Activated CD4-positive, alpha-beta T cell treated with anti-CD3 and anti-CD28 coated beads for 36 hours (primary cell): ENCODE measurements at regions of chr1 and their contacts with region 1.

Region 1: GRCh38 chr1:161389691-161390558 is 22.2 kb upstream of the CFAP126 start:
- DNase-seq: peak; percentile 97
- ATAC-seq: peak; percentile 83
- H3K4me3 Mint-ChIP-seq: peak overlapping the region; percentile 87
- H3K27ac Mint-ChIP-seq: peak overlapping the region; percentile 96
- H3K4me1 Mint-ChIP-seq: peaks cover 43% of the 10 kb centered on the region
- H3K27me3 Mint-ChIP-seq: no peaks in the 10 kb centered on the region

Region 2: DNA sequence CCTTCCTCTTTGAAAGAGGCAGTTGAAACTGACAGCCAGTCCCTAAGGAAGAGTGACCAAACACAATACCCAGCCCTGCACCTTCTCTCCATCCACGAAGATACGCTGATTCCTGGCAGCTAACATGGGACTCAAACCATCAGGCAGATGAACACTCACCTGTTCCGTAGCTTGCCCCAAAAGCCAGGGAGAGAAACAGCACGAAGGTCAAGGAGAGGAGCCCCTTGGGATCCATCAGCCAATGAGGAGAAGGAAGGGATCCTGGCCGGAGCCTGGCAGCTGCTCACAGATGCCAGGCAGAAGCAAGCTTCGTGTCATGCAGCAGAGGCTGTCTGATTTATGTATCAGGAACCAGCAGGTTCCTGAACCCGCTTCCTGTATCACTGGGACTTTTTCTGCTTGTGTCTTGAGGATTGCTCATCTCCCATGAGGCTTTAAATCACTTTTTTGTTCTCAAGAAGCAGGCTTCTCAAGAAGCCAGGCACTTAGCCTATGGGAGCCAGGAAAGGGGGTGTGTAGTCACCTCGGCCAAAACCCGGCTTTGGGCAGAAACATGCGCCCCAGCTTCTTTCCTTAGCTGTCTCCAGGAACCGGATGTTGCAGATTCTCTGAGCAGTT is 743.1 kb before region 1 on chr1 and contains the start of gene SLAMF1:
- CTCF ChIA-PET with region 1: no interaction called
- POLR2A ChIA-PET with region 1: interaction called, 12 read pairs
- intact Hi-C with region 1: no loop called
- DNase-seq: peak; percentile 81
- ATAC-seq: peak; percentile 81
- H3K4me3 Mint-ChIP-seq: peak within 1 kb of the TSS; percentile 93
- H3K27ac Mint-ChIP-seq: peak within 1 kb of the TSS; percentile 92
- H3K4me1 Mint-ChIP-seq: peaks cover 56% of the 10 kb centered on the region
- H3K27me3 Mint-ChIP-seq: no peaks in the 10 kb centered on the region
- total RNA-seq, gene SLAMF1: 103 to 108 TPM

Region 3: DNA sequence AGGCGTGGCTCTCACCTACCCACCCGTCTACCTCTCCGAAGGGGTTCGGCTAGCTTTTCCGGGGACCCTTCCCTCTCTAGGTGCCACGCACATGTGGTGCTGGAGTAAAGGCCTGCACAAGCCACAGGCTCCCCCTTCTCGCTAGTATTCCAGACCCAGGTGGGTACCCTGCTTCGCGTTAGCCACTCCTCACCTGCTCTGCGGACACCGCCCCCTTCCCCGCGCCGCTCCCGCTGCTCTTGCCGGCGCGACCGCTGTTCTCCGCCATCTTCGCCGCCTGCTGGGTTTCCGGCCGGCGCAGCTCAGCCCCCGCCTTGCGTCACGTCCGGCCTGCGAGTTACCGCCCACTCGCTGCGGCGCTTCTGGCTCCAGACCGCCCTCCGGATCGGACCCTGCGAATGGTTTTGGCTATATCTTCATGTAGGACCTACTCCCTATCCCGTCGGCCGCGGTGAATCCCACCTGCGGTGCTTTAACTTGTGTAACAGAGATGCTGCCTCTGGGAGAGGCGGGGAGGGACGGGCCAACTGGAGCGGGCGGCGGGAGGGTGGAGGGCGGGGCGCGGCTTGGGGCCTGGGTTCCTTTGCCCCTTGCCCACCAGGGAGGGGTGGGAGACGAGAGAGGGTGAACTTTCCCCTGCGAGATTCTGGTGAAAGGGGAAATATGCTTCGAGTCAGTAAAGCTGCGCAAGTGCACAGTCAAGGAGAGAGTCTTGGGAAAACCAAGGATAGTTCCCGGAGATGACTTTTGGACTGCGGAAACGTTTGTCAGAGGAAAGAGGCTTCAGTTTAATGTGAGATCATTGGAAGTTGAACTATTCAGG is 272.0 kb before region 1 on chr1 and contains the starts of genes NIT1 and PFDN2:
- CTCF ChIA-PET with region 1: no interaction called
- POLR2A ChIA-PET with region 1: no interaction called
- intact Hi-C with region 1: loop called in 1 of 2 experiments (anchors 5 kb)
- DNase-seq: peak; percentile 94
- ATAC-seq: peak; percentile 53
- H3K4me3 Mint-ChIP-seq: peak within 1 kb of the TSS; percentile 94
- H3K27ac Mint-ChIP-seq: peak within 1 kb of the TSS; percentile 98
- H3K4me1 Mint-ChIP-seq: peaks cover 75% of the 10 kb centered on the region
- H3K27me3 Mint-ChIP-seq: no peaks in the 10 kb centered on the region
- total RNA-seq, gene NIT1: 58.2 to 62.1 TPM
- total RNA-seq, gene PFDN2: 108 to 136 TPM

Region 4: DNA sequence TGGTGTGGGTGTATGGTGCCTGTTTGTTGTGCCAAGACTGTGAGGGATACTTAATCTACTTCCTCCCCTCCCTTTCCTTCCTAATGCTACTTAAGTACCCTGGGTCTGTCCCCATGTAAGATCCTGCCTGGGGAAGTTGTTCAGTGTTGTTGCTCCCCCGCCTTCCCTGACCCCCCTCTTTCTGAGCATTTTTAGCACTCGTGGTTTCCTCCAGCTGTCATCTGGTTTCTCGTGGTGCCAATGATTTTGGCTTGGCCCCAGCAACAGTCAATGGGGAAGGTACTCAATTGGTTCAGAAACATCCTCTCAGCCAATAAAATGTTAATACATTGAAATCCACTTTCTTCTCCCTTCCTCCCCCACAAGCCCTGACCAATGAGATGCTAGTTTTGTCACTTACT is 204.6 kb before region 1 on chr1:
- CTCF ChIA-PET with region 1: interaction called, 35 read pairs
- POLR2A ChIA-PET with region 1: interaction called, 4 read pairs
- intact Hi-C with region 1: loop called in 1 of 2 experiments (anchors 5 kb)
- DNase-seq: peak; percentile 86
- ATAC-seq: peak; percentile 71
- H3K4me3 Mint-ChIP-seq: peak overlapping the region; percentile 50
- H3K27ac Mint-ChIP-seq: peak overlapping the region; percentile 90
- H3K4me1 Mint-ChIP-seq: peaks cover 79% of the 10 kb centered on the region
- H3K27me3 Mint-ChIP-seq: no peaks in the 10 kb centered on the region

Region 5: DNA sequence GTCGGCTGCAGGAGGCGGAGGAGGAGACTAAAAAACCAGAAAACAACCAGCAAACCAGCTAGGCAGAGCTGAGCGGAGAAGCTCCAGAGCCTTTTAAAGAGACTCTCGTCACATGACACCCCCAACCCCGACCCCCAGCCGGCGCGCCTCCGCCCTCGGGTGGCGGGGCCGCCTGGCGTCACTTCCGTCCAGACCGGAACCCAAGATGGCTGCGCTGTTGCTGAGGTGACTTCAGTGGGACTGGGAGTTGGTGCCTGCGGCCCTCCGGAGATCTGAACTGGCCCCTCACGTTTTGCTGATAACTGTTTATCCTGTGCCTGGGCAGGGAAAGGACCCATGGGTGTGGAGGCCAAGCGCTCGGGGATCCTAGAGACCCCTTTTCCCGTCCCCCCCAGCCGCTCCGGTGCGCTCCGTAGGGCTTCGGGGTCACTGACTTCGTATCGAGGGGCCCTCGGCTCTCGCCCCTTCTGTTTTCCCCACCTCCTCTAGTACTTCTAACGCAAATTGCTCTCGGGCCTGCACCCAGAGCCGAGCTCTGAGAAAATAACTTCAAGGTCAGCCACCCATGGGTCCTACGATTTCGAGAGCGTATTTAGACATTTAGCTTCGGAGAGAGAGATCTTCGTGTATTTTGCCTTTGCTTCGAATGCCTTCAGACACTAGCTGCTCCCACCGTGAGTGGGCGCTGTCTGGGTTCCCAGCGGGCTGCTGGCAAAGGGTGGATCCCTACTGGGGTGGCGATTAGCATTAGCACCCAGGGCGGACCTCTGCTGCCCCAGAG is 75.5 kb before region 1 on chr1 and contains the start of gene SDHC:
- CTCF ChIA-PET with region 1: interaction called, 3 read pairs
- POLR2A ChIA-PET with region 1: no interaction called
- intact Hi-C with region 1: loop called (anchors 1 to 5 kb)
- DNase-seq: peak; percentile 94
- ATAC-seq: peak; percentile 98
- H3K4me3 Mint-ChIP-seq: peak within 1 kb of the TSS; percentile 96
- H3K27ac Mint-ChIP-seq: peak within 1 kb of the TSS; percentile 96
- H3K4me1 Mint-ChIP-seq: peaks cover 21% of the 10 kb centered on the region
- H3K27me3 Mint-ChIP-seq: no peaks in the 10 kb centered on the region
- total RNA-seq, gene SDHC: 191 to 235 TPM

Region 6: GRCh38 chr1:161749509-161750407 is 359.8 kb after region 1 on chr1 and contains the start of gene DUSP12:
- CTCF ChIA-PET with region 1: no interaction called
- POLR2A ChIA-PET with region 1: no interaction called
- intact Hi-C with region 1: loop called in 1 of 2 experiments (anchors 1 kb)
- DNase-seq: peak; percentile 94
- ATAC-seq: peak; percentile 97
- H3K4me3 Mint-ChIP-seq: peak within 1 kb of the TSS; percentile 99
- H3K27ac Mint-ChIP-seq: peak within 1 kb of the TSS; percentile 99
- H3K4me1 Mint-ChIP-seq: peaks cover 43% of the 10 kb centered on the region
- H3K27me3 Mint-ChIP-seq: peaks cover 8% of the 10 kb centered on the region
- total RNA-seq, gene DUSP12: 28.0 to 28.1 TPM